ENCODE measurements at regions of chr1 and their contacts with region 1.

Region 1: DNA sequence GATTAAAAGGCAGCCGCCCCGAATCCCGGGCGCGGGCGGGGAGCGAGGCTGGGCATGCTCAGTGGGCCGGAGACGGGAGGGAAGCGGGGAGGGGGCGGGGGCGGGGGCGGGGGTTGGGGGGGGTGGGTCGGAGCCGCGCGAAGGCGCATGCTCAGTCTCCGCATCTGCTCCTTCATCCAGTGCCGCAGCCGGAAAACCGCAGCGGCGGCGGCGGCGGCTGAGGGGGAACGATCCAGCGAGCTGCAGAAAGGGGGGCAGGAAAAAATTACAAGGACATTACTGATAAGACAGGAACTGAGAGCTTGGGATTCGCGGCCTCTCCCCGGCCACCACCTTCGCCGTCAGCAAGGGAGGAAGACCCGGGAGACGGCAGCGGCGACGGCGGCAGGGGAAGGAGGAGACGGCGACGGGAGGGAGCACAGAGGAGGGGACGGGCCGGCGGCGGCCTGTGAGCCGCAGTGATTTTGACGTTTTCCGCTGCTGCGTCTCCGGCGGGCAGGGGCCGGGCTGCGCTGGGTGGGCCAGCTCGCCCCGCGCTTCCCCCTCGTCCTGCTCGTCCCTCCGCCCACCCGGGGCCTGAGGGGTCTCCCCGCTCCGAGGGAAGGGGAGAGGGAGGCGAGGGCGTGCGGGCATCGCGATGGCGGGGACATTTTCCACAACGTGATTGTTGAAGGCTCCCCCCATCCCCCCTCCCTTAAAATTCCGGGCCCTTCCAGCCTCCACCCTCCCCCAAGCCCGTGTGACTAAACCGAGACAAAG is at the start of gene CAMSAP2:
- DNase-seq: peak; percentile 93
- ATAC-seq: peak; percentile 92 to 93
- total RNA-seq, gene CAMSAP2: 32.1 to 40.9 TPM

Region 2: DNA sequence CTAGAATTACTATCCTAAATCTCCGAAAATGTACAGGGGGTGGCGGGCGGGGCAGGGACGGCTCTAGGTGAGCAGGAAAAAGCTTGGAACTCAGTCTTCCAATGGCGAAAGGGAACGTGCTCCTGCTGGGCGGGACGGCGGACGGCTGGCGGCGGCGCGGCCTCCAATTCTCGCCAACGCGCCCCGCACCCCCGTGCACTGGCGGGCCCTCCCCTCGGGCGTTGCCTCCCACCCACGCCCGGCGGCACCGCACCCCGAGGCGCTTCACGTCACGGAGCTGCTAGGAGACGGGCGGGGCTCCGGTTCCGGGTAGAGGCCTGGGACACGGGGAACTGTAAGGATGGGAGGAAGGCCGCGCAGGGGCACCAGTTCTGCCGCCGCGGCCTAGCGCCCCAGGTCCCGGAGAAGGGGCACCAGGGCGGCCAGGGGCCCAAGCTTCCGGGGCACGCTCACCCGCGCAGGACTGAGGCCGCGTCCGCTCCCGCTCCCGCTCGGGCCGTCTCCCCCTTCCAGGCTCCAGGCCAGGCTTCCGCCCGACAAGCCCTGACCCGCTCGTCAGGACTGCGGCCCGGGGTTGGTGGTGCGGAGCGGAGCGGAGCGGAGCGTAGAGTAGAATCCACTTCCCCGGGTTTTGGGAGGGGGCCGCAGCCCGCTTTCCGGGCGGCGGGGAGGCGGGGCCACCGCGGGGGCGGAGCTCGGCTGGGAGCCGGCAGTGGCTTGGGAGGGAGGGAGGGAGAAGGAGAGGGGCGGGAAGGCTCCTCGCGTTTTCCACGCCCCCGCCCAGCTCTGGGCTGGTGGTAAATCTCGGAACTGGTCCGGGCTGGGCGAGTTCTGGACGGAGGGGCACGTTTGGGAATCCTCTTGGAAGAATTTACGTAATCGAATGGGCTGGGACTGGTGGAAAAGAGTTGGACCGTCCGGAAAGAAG is 69.3 kb before region 1 on chr1 and contains the start of gene DDX59:
- intact Hi-C with region 1: loop called in 1 of 2 experiments (anchors 1 kb)
- DNase-seq: peak; percentile 97
- ATAC-seq: peak; percentile 94 to 97
- total RNA-seq, gene DDX59: 9.7 to 11.9 TPM

Region 3: GRCh38 chr1:200778766-200779165 is 39.8 kb after region 1 on chr1:
- intact Hi-C with region 1: loop called in 1 of 2 experiments (anchors 2 kb)
- DNase-seq: no peak
- ATAC-seq: no peak

Region 4: DNA sequence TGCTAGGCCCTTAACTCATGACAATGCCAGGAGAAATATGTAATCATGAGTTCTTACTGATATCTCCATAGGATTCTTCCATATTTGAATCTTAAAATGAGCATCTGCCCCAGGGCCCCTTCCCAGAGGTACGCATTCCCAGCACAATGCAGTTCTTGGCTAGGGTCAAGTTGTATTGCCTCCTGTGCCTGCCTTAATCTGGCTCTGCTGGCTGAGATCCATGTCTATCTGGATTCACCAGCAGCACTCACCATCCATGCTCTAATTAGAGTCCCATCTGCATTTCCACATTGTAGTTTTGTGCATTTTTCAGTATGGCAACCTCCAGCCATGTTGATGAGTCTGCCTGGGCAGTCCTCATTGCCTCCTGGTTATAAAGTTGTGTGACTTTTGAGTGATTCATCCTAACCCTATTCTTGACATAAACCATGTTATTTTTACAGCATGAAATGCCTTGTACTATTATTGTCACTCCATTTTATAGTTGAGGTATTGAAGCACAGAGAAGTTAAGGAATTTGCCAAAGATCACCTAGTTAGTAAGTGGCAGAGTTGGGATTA is 55.7 kb after region 1 on chr1:
- intact Hi-C with region 1: loop called in 1 of 2 experiments (anchors 5 kb)
- DNase-seq: no peak
- ATAC-seq: peak in 1 of 2 donors; percentile 26